ENCODE measurements at regions of chr16 and their contacts with region 1.

Region 1: GRCh38 chr16:11506741-11507305 is 79.9 kb downstream of the LITAF start:
- H3K4me3 ChIP-seq: no peak overlapping the region
- H3K27ac ChIP-seq: no peak overlapping the region
- H3K4me1 ChIP-seq: no peaks in the 10 kb centered on the region
- CTCF ChIP-seq: no peak

Region 2: GRCh38 chr16:11470676-11471415 is 36.0 kb before region 1 on chr16:
- CTCF ChIA-PET with region 1: no interaction called
- POLR2A ChIA-PET with region 1: no interaction called
- H3K4me3 ChIP-seq: no peak overlapping the region
- H3K27ac ChIP-seq: no peak overlapping the region
- H3K4me1 ChIP-seq: no peaks in the 10 kb centered on the region
- CTCF ChIP-seq: no peak

Region 3: DNA sequence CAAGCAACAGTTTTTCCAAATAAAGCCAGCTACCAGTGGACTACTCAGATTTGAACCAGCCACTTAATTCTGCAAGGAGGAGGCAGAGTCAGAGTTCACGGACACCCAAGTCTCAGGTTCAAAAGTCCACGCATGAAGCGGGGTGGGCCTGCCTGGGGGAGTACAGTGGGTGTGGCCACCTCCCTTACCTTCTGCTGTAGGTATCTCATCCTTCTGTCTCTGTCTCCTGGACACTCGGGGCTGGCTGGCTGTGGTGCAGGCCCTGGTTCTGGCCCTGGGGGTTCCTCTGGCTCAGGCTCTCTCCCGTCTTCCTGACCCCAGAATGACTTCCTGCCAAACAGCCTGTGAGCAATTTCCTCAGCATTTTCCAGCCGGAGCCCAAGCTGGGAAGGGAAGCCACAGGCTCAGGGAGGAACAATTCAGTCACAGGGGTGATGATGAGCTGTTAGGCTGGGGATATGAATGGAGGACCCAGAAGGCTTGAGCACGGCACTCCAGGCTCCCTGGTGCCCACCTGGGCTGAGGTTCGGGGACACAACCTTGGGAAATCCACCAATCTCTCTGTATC is 22.0 kb before region 1 on chr16:
- CTCF ChIA-PET with region 1: no interaction called
- POLR2A ChIA-PET with region 1: no interaction called
- H3K4me3 ChIP-seq: no peak overlapping the region
- H3K27ac ChIP-seq: no peak overlapping the region
- H3K4me1 ChIP-seq: no peaks in the 10 kb centered on the region
- CTCF ChIP-seq: no peak

Region 4: GRCh38 chr16:11665071-11665491 is 158.3 kb after region 1 on chr16:
- CTCF ChIA-PET with region 1: no interaction called
- POLR2A ChIA-PET with region 1: interaction called, 16 read pairs
- H3K4me3 ChIP-seq: no peak overlapping the region
- H3K27ac ChIP-seq: no peak overlapping the region
- H3K4me1 ChIP-seq: no peaks in the 10 kb centered on the region
- CTCF ChIP-seq: no peak

Measured in HEK293 (cell line).